Activated CD8-positive, alpha-beta memory T cell treated with anti-CD3 and anti-CD28 coated beads, Interleukin-2, amount 10 ng/mL, durations not matched to agents 7 days and 5 days (primary cell): ENCODE measurements at regions of chr12 and their contacts with region 1.

Region 1: DNA sequence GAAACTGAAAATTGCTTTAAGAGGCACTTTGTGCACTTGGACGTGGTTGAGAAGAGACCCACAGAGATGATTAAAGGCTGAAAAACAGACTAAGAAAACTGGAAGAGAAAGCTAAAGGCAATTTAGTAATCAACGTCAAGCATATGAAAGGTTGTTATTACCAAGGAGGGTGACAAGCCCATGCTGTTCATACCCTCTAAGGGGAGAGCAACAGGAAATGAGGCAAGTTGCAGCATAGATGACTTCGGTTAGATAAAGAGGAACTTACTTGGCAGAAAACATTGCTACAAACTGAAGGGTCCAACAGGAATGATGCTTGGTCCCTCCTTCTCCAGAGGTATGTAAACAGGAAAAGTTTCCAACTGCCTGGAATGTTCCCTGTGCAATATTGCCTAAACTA is 107.8 kb downstream of the DUSP6 start:
- DNase-seq: peak; percentile 70
- ATAC-seq: peak; percentile 79
- H3K4me3 Mint-ChIP-seq: peak overlapping the region; percentile 38
- H3K27ac Mint-ChIP-seq: peak overlapping the region; percentile 93
- H3K4me1 Mint-ChIP-seq: peaks cover 53% of the 10 kb centered on the region
- H3K27me3 Mint-ChIP-seq: no peaks in the 10 kb centered on the region

Region 2: DNA sequence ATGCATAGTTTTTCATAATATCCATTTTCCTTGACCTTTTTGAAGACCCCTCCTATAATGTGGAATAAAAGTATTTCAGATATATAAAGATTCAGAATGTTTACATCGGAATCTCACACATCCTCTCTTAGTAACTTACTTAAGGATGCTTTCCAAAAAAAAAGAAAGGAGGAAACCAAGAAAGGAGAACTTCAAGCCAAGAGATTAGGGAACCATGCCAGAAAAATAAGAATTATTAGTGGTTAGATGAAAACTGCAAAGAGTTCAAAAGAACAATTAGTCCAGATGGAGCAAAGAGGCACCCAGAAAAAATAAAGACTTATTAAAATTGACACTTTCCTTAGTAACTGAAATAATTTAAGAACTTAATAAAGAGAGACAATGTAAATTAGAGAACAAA is 71.4 kb before region 1 on chr12:
- CTCF ChIA-PET with region 1: no interaction called
- DNase-seq: no peak
- ATAC-seq: no peak
- H3K4me3 Mint-ChIP-seq: no peak overlapping the region
- H3K27ac Mint-ChIP-seq: no peak overlapping the region
- H3K4me1 Mint-ChIP-seq: peaks cover 11% of the 10 kb centered on the region
- H3K27me3 Mint-ChIP-seq: no peaks in the 10 kb centered on the region

Region 3: GRCh38 chr12:89225808-89226411 is 18.6 kb before region 1 on chr12:
- CTCF ChIA-PET with region 1: interaction called, 33 read pairs
- DNase-seq: no peak
- ATAC-seq: peak; percentile 63
- H3K4me3 Mint-ChIP-seq: peak overlapping the region; percentile 44
- H3K27ac Mint-ChIP-seq: peak overlapping the region; percentile 89
- H3K4me1 Mint-ChIP-seq: peaks cover 64% of the 10 kb centered on the region
- H3K27me3 Mint-ChIP-seq: no peaks in the 10 kb centered on the region

Region 4: GRCh38 chr12:89345830-89346740 is 101.5 kb after region 1 on chr12:
- CTCF ChIA-PET with region 1: interaction called, 28 read pairs
- DNase-seq: peak; percentile 89
- ATAC-seq: peak; percentile 81
- H3K4me3 Mint-ChIP-seq: peak overlapping the region; percentile 93
- H3K27ac Mint-ChIP-seq: peak overlapping the region; percentile 87
- H3K4me1 Mint-ChIP-seq: peaks cover 67% of the 10 kb centered on the region
- H3K27me3 Mint-ChIP-seq: no peaks in the 10 kb centered on the region

Region 5: GRCh38 chr12:89352492-89353187 is 108.1 kb after region 1 on chr12 and contains the start of gene DUSP6:
- CTCF ChIA-PET with region 1: interaction called, 28 read pairs
- DNase-seq: peak; percentile 98
- ATAC-seq: peak; percentile 82
- H3K4me3 Mint-ChIP-seq: peak within 1 kb of the TSS; percentile 93
- H3K27ac Mint-ChIP-seq: peak within 1 kb of the TSS; percentile 93
- H3K4me1 Mint-ChIP-seq: peaks cover 38% of the 10 kb centered on the region
- H3K27me3 Mint-ChIP-seq: no peaks in the 10 kb centered on the region
- total RNA-seq, gene DUSP6: 76.3 to 100 TPM